Right ventricle myocardium inferior (tissue), 1 donor: ENCODE measurements at regions of chr7 and their contacts with region 1.

Region 1: GRCh38 chr7:66654123-66654732 is 25.5 kb downstream of the KCTD7 start:
- DNase-seq: peak; percentile 99
- ATAC-seq: peak; percentile 98

Region 2: DNA sequence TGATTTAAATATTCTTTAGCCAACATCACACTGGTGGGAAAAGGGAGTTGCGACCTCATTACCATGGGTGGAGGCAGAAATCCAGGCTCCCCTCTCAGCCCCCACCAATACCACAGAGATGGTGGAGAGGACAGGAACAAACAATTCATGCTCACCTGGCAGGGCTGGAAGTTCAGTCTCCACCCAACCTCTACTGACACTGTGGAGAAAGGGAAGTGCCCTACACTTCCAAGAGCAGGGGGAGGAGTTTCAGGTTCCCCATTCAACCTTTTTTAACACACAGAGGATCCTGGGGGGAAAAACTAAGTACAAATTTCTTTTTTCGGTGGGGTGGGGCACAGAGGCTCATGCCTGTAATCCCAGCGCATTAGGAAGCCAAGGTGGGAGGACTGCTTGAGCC is 235.7 kb before region 1 on chr7:
- intact Hi-C with region 1: no loop called
- DNase-seq: no peak
- ATAC-seq: no peak

Region 3: GRCh38 chr7:66591799-66592596 is 62.2 kb before region 1 on chr7:
- intact Hi-C with region 1: loop called (anchors 2 kb)
- DNase-seq: peak; percentile 96
- ATAC-seq: peak; percentile 97

Region 4: DNA sequence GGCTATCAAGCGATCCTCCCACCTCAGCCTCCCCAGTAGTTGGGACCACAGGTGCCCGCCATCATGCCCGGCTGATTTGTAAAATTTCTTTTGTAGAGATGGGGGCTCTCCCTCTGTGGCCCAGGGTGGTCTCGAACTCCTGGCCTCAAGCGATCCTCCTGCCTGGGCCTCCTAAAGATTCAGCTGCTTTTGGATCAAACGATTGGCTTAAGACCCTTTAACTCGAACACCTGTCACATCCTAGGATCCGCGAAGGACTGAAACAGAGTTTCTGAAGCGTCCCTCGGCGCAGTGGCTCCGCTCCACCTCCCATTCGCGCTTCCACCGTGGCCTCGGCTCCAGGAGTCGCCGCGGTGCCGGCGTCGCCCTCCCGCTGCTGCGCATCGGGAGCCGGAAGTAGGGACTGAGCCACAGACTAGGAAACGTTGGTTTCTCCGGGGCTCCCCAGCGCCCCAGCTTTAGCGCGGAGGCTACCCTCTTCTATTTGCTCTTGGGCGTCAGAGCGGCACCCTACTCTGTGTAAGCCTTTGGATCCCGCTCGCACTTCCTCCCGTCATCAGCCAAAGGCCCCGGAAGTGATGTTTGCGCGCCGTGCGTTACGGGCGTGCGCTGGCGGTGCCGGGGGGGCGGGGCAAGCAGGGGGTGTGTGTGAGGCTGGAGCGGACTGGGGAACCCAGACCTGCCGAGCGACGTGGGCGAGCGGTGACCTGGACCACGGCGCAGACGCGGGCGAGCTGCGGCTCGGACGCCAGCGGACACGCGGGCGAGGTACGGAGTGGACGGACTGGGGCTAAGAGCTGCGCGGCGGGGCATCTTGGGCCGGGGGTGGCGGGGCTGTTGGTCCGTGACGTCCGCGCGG is 27.5 kb after region 1 on chr7:
- intact Hi-C with region 1: loop called (anchors 2 kb)
- DNase-seq: peak; percentile 99
- ATAC-seq: peak; percentile 99

Region 5: GRCh38 chr7:66844552-66845378 is 190.5 kb after region 1 on chr7:
- intact Hi-C with region 1: no loop called
- DNase-seq: peak; percentile 98
- ATAC-seq: peak; percentile 98